ENCODE measurements at regions of chr3 and their contacts with region 1.

Region 1: DNA sequence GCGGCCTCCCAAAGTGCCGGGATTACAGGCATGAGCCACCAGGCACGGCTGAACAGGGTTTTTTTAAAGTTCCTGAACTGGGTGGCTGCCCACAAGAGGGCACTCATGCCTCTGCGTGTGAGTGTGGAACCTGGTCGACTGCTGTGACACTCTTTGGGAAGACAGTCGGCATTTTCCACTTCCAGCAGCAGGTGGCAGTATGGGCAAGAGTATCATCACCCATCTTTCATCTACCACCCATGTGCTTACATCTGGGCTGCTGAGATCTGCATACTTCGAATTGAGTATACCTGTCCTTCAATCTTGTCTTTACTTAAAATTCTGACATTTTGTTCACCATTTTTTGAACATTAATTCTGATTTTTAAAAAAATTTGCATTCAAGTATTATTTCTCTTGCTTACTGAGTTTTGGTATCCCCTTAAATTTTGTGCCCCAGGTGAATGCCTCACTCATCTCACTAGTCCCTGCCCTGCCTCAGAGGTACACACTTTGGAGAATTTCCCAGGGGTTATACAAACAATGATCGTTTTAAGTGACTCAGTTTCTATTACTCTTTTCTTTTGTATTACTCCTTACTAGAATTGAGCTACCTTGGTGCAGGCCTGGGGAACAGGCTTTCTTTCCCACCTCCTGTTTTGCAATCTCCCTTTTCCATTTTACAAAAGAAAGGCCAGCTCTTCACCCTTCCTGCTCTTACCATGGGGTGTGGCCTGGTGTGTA is 11.8 kb downstream of the CLEC3B start:
- DNase-seq: peak; percentile 88 to 93 (median 90)
- ATAC-seq: peak; percentile 57 to 85 (median 82)
- H3K4me3 ChIP-seq: peak overlapping the region in 3 of 12 donors; percentile 9 to 25 (median 11)
- H3K27ac ChIP-seq: no peak overlapping the region
- H3K4me1 ChIP-seq: peaks cover 0 to 62% (median 35%) of the 10 kb centered on the region in 12 donors
- H3K27me3 ChIP-seq: no peaks in the 10 kb centered on the region
- CTCF ChIP-seq: peak; percentile 77 to 94 (median 92)
- POLR2A ChIP-seq: no peak

Region 2: DNA sequence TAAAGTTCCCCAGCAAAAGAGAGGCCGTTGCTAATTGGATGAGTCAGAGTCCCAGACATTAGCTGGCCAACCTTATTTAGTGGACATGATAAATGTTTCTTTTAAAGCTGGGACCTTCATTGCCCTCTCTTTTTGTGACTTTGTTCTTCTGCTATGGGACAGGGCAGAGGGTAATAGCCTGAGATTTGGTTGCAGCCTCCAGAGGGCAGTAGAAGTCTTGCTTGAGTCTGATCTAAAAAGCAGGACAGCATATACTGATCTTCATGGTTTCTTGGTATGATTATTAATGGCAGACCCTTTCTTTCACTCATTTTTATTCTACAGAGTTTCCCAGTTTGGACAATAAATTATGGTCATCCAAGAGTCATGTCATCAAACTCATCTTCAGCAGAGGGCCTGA is 508.0 kb before region 1 on chr3:
- intact Hi-C with region 1: loop called in 2 of 10 experiments (anchors 5 to 10 kb)
- DNase-seq: no peak
- ATAC-seq: no peak
- H3K4me3 ChIP-seq: no peak overlapping the region
- H3K27ac ChIP-seq: no peak overlapping the region
- H3K4me1 ChIP-seq: no peaks in the 10 kb centered on the region
- H3K27me3 ChIP-seq: peaks cover 0 to 40% (median 0%) of the 10 kb centered on the region in 9 donors
- CTCF ChIP-seq: peak in 3 of 12 donors; percentile 4 to 21 (median 4)
- POLR2A ChIP-seq: no peak

Region 3: DNA sequence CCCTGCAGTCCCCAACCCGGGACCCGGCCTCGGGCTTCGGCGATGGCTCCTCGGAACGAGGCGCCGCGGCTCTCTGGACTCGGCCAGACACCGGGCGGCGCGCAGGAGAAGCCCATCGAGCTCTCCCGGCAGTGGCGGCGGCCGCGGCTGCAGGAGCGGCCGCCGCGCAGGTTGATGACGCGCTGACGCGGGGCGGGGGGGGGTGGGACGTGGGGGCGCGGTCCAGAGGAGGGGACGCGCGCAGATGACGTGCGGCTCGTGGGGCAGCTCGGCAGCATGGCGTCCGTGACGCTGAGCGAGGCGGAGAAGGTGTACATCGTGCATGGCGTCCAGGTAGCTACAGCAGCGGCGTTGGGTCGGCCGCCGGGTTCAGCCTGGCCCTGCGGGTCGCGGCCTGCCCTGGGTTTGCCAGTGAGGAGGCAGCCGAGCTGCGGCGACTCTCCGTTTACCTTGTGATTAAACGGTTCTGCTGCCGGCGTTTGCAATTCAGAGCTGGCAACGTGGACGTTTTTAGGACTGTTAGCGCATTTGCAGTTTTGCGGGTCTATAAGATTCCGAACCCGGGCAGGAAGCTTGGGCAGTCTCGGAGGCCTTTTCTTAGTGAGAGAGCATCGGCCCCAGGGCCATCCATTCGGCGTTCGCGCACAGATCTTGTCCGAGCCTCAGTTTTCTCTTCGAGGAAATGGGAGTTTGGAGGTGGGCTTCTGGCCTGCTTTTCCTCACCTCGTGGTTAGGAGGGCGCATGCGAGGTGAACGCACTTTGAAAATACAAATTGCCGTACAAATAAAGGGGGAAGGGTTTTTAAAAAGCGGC is 61.7 kb before region 1 on chr3 and contains the starts of genes EXOSC7 and ZDHHC3:
- intact Hi-C with region 1: loop called in 1 of 10 experiments (anchors 5 kb)
- DNase-seq: peak; percentile 90 to 94 (median 91)
- ATAC-seq: peak; percentile 87 to 93 (median 92)
- H3K4me3 ChIP-seq: peak within 1 kb of the TSS; percentile 42 to 99 (median 84)
- H3K27ac ChIP-seq: peak within 1 kb of the TSS; percentile 56 to 94 (median 90)
- H3K4me1 ChIP-seq: peaks cover 2 to 57% (median 26%) of the 10 kb centered on the region in 12 donors
- H3K27me3 ChIP-seq: no peaks in the 10 kb centered on the region
- CTCF ChIP-seq: peak in 1 of 12 donors; percentile 7
- POLR2A ChIP-seq: peak in 1 of 2 donors; percentile 72
- total RNA-seq, gene EXOSC7: 23.8 to 87.3 (median 30.7) TPM
- total RNA-seq, gene ZDHHC3: 40.5 to 94.7 (median 52.7) TPM

Region 4: DNA sequence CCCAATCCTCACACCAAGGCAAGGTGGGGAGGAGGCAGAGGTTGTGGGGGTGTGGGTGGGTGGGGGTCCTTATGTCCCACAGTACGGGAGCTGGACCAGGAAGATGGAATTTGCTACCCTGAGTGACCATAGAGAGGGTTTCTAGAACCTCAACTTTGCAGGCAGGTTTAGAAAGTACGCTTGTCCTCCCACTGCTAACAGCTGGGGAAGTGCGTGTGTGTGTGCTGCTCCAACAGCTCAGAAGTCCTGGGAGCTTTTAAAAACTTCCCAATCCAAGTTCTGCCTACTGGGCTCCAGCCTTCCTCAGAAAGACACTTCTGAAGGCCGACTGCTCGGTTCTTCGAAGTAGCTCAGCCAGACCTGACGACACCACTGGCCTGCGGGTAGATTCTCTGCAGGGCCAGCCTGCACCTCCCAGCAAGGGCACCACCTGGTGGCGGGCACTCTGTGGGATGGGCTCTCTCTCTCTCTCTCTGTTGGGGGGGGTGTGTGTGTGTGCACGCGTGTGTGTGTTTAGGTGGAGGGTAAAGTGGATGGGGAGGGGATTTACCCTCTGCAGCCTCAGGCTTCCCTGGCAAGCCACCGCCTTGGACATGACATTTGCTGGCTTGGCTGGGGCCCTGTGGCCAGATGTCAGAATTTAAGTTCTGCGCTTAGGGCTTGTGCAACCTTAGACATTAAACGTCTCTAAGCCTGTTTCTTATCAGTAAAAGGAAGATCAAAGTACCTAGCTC is 172.6 kb after region 1 on chr3:
- intact Hi-C with region 1: loop called (anchors 1 to 2 kb)
- DNase-seq: peak; percentile 77 to 91 (median 87)
- ATAC-seq: peak; percentile 81 to 98 (median 96)
- H3K4me3 ChIP-seq: no peak overlapping the region
- H3K27ac ChIP-seq: peak overlapping the region in 1 of 12 donors; percentile 69
- H3K4me1 ChIP-seq: peaks cover 0 to 9% (median 0%) of the 10 kb centered on the region in 12 donors
- H3K27me3 ChIP-seq: peaks cover 0 to 2% (median 0%) of the 10 kb centered on the region in 9 donors
- CTCF ChIP-seq: peak; percentile 48 to 77 (median 67)
- POLR2A ChIP-seq: no peak

Region 5: GRCh38 chr3:45507820-45508317 is 470.0 kb after region 1 on chr3:
- intact Hi-C with region 1: loop called in 2 of 10 experiments (anchors 5 kb)
- DNase-seq: peak in 4 of 5 donors; percentile 39 to 71 (median 52)
- ATAC-seq: peak in 3 of 4 donors; percentile 66 to 76 (median 68)
- H3K4me3 ChIP-seq: no peak overlapping the region
- H3K27ac ChIP-seq: peak overlapping the region in 5 of 12 donors; percentile 10 to 41 (median 26)
- H3K4me1 ChIP-seq: peaks cover 0 to 15% (median 2%) of the 10 kb centered on the region in 12 donors
- H3K27me3 ChIP-seq: no peaks in the 10 kb centered on the region
- CTCF ChIP-seq: peak in 9 of 12 donors; percentile 9 to 57 (median 32)
- POLR2A ChIP-seq: no peak

Region 6: DNA sequence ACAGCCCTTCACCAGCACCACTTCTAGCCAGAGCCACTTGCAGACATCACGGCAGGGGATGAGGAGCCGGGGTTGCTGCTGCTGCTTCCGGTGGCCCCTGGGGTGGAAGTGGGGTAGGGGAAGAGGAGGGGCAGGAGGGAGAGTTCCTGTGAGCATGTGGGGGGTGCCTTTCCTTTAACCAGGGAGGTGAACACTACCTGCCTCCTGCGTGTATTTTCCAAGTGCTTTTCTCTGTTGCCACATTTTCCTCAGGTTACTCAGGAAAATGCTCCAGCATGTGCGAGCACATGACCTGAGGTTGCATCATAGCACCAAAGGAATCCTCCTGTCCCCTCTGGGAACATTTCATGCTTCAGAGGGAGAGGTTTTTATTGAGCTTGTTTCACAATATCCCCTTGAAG is 639.1 kb after region 1 on chr3:
- intact Hi-C with region 1: loop called in 1 of 10 experiments (anchors 10 kb)
- DNase-seq: no peak
- ATAC-seq: peak in 3 of 4 donors; percentile 45 to 66 (median 58)
- H3K4me3 ChIP-seq: peak overlapping the region in 2 of 12 donors; percentile 3 to 6
- H3K27ac ChIP-seq: peak overlapping the region; percentile 53 to 85 (median 72)
- H3K4me1 ChIP-seq: peaks cover 3 to 48% (median 25%) of the 10 kb centered on the region in 12 donors
- H3K27me3 ChIP-seq: no peaks in the 10 kb centered on the region
- CTCF ChIP-seq: no peak
- POLR2A ChIP-seq: no peak